ENCODE measurements at regions of chr17 and their contacts with region 1.

Region 1: DNA sequence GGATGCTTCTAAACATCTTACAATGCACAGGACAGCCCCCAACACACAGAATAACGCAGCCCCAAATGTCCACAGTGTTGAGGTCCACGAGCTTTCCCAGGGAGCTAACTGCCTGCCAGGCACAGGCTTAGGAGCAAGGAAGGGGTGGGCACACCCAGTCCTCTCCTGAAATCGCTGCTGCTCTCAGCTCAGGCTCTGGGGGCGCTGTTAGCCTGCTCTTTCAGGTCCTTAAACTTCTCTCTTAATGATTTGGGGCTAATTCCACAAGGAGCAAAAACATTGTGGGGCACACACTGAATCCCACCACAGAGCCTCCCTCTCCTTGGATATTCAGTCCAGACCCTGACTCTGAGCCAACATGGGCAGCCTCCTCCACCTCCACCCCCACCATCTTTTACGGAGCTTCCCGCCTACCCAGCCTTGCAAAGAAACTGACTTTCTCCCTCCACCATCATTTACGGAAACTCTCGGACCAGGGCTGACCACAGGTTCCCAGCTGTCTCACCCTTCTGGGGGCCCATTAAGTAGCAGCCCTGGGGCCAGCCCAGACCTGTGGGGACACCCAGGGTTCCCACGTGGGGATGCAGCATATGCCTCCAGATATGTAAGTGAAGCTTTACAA is 1.1 kb downstream of the CD300H start:
- DNase-seq: peak; percentile 53
- ATAC-seq: peak; percentile 66
- H3K4me3 Mint-ChIP-seq: no peak overlapping the region
- H3K27ac Mint-ChIP-seq: no peak overlapping the region
- H3K4me1 Mint-ChIP-seq: peaks cover 15% of the 10 kb centered on the region
- H3K27me3 Mint-ChIP-seq: peaks cover 36% of the 10 kb centered on the region

Region 2: DNA sequence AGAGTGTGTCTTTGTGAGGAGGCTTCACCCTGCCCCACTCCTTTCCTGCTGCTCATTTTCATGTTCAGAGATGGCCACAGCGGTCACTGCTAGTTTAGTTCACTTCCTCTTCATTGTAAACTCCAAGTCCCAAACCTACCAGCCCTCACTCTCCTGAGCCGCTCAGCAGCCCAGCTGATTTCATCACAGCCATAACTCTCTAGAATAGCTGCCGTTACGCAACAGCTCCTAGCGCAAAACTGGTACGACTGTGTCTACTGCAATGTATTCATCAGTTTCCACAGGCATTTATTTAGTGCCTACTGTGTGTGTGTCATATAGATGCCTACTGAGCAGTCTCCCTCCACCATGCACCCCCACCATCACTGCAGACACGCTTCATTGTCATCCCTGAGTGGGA is 596.3 kb before region 1 on chr17:
- CTCF ChIA-PET with region 1: no interaction called
- POLR2A ChIA-PET with region 1: no interaction called
- DNase-seq: no peak
- ATAC-seq: no peak
- H3K4me3 Mint-ChIP-seq: no peak overlapping the region
- H3K27ac Mint-ChIP-seq: no peak overlapping the region
- H3K4me1 Mint-ChIP-seq: no peaks in the 10 kb centered on the region
- H3K27me3 Mint-ChIP-seq: peaks cover 14% of the 10 kb centered on the region

Region 3: GRCh38 chr17:74493381-74493833 is 72.8 kb before region 1 on chr17:
- CTCF ChIA-PET with region 1: no interaction called
- POLR2A ChIA-PET with region 1: no interaction called
- DNase-seq: peak; percentile 76
- ATAC-seq: peak; percentile 72
- H3K4me3 Mint-ChIP-seq: no peak overlapping the region
- H3K27ac Mint-ChIP-seq: no peak overlapping the region
- H3K4me1 Mint-ChIP-seq: peaks cover 13% of the 10 kb centered on the region
- H3K27me3 Mint-ChIP-seq: peaks cover 12% of the 10 kb centered on the region

Region 4: DNA sequence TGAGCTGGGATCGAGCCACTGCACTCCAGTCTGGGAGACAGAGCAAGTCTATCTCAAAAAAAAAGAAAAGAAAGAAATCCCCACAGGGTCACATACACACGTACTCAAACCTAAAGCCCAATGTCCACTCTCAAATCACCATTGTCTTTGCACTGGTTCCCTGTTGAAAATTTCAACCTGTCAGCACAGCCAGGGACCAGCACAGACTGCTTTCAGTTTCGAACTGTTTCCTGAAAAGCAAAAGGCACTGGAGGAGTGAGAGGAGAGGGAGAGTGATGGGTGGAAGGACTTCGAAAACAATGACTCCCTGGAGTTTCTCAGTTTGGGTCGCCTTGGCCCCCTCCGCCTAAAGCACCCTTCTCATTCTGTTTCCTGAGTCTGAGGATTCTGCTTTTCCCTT is 11.3 kb before region 1 on chr17:
- CTCF ChIA-PET with region 1: interaction called, 13 read pairs
- POLR2A ChIA-PET with region 1: no interaction called
- DNase-seq: no peak
- ATAC-seq: no peak
- H3K4me3 Mint-ChIP-seq: no peak overlapping the region
- H3K27ac Mint-ChIP-seq: no peak overlapping the region
- H3K4me1 Mint-ChIP-seq: peaks cover 14% of the 10 kb centered on the region
- H3K27me3 Mint-ChIP-seq: peaks cover 26% of the 10 kb centered on the region

Region 5: DNA sequence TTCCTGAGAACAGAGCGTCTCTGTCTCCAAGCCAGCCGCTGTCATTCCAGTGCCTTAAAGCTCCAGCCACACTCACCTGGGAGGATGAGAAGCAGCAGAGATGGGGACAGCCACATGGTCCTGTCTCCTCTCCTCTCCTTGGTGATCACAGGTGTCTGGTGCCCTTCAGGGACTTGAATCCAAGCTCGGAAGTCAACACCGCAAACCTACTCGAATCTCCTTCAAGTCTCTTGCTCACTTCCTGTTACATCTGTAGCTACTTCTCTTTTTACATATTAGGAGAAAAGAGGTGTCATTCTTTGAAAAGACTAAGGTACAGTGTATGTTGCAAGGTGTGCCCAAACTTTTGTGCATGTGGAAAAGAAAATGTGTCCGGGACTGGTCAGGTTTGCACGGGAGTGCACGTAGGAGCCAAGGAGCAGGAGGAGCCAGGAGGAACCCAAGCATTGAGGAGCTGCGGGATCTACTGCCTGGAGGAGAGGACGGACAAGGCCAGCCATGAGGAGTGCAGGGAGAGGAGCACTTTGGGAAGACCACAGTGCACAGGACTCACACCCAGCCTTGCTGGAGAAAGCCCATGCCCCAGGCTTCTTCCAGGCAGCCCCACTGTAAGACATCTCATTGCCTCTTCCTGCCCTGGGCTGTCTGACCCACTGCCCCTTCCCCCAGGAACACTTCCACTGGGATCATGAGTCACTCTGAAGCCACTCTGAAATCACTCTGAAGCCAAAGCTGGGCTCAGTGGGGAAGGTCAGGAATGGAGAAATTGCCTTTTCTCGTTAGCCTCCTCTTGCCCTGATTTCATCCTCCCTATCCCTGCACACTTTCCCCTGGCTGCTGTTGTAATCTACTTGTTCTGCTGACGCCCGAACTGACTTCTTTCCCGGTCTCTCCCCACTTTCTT is 26.1 kb after region 1 on chr17 and contains the start of gene CD300LD:
- CTCF ChIA-PET with region 1: interaction called, 10 read pairs
- POLR2A ChIA-PET with region 1: no interaction called
- DNase-seq: no peak
- ATAC-seq: peak; percentile 49
- H3K4me3 Mint-ChIP-seq: no peak within 1 kb of the TSS
- H3K27ac Mint-ChIP-seq: no peak within 1 kb of the TSS
- H3K4me1 Mint-ChIP-seq: peaks cover 18% of the 10 kb centered on the region
- H3K27me3 Mint-ChIP-seq: peaks cover 43% of the 10 kb centered on the region
- total RNA-seq, gene CD300LD: not detected

Region 6: DNA sequence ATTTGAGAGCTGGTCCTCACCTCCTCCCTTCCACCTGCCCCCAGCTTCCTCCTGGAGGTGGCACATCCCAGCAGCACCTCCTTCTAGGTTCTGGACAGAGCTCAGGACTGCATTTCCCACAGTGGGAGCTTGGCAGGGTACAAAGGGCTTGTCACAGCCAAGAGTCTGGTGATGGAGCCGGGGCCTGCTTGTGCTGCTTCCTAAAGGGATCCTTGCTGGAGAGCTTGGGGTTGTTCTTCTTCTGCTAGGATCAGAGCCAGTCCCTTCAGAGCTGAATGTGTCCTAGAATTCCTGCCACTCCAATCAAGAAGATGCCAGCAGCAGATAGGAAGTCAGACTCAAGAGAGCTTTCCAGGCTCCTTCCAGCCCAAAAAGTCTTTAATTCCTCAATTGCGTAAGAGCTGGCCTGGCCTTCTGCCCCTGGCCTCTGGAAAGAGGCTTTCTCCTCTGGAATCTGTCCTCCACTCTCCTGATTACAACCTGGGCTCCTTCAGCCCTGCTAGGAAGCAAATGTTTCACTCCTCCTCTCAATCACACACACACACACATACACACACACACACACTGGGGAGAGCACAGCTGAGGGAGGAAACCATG is 52.9 kb after region 1 on chr17:
- CTCF ChIA-PET with region 1: no interaction called
- POLR2A ChIA-PET with region 1: no interaction called
- DNase-seq: no peak
- ATAC-seq: no peak
- H3K4me3 Mint-ChIP-seq: no peak overlapping the region
- H3K27ac Mint-ChIP-seq: no peak overlapping the region
- H3K4me1 Mint-ChIP-seq: no peaks in the 10 kb centered on the region
- H3K27me3 Mint-ChIP-seq: peaks cover 69% of the 10 kb centered on the region

Measured in activated CD8-positive, alpha-beta T cell treated with anti-CD3 and anti-CD28 coated beads, Interleukin-2, amount 10 ng/mL, durations not matched to agents 7 days and 5 days (primary cell).